ENCODE measurements at regions of chr21 and their contacts with region 1.

Region 1: GRCh38 chr21:45074818-45075595 is 627 bp downstream of the ADARB1 start:
- DNase-seq: peak; percentile 60
- H3K4me3 ChIP-seq: peak overlapping the region; percentile 58 to 96 (median 87)
- H3K27ac ChIP-seq: peak overlapping the region; percentile 30
- H3K4me1 ChIP-seq: peaks cover 39% of the 10 kb centered on the region
- H3K27me3 ChIP-seq: no peaks in the 10 kb centered on the region
- CTCF ChIP-seq: no peak

Region 2: DNA sequence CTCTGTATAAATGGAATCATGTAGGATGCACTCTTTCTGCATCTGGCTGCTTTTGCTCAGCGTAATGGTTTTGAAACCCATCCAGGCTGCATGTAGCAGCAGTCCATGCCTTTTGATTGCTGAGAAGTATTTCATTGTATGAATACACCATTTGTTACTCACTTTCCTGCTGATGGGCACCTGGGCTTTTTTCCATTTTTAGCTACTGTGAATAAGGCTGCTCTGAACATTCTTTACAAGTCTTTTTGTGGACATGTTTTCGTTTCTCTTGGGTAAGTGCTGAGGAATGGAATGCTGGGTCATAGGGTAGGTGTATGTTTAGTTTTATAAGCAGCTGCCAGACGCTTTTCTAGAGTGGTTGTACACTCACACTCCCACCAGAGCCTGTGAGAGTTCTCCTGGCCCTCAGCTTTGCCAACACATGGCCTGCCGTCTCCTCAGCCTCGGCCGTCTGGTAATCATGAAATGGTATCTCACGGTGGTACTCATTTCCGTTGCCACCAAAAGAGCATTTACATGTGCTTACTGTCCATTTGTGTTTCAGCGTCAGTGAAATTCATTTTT is 112.5 kb before region 1 on chr21:
- CTCF ChIA-PET with region 1: no interaction called
- dilution Hi-C with region 1: no loop called
- in situ Hi-C with region 1: no loop called
- intact Hi-C with region 1: loop called (anchors 5 kb)
- DNase-seq: peak; percentile 94
- H3K4me3 ChIP-seq: no peak overlapping the region
- H3K27ac ChIP-seq: peak overlapping the region; percentile 75
- H3K4me1 ChIP-seq: peaks cover 63% of the 10 kb centered on the region
- H3K27me3 ChIP-seq: no peaks in the 10 kb centered on the region
- CTCF ChIP-seq: no peak

Region 3: DNA sequence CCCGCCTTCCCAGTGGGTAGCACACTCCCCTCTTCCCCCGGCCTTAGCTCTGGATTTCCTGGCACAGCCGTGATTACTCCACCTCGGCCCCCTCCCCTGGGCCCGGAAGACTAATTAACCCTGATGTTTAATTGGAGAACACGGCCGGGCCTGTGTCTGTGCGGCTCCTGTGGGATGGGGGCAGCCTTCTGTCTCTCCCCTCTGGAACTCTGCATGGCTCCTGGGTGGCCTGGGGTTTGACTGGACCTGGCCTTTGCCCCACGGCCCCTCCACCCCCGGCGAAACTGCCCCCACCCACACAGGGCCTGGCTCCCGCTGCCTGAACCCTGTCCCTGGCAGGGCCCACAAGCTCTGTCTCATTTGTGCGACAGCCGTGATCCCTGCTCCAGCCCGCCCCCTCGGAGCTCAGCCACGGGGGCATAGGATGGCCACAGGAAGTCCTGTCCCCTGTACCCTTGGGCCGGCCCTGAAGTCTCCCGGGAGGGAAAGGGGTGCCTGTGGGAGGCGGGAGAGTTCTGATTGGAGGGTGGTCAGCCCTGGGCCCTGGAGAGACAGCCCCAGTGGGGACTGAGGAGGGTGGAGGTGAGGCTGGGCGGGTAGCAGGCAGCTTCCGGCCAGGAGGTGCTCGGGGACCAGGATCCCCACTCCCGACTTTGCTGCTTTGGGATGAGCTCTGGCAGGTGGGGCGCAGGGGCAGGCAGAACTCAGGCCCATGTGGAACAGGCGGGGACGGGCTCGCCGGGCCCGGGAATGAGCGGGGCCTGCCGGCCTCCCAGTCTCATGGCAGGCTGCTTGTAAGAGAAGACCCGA is 90.2 kb before region 1 on chr21:
- CTCF ChIA-PET with region 1: no interaction called
- dilution Hi-C with region 1: no loop called
- in situ Hi-C with region 1: no loop called
- intact Hi-C with region 1: no loop called
- DNase-seq: no peak
- H3K4me3 ChIP-seq: no peak overlapping the region
- H3K27ac ChIP-seq: no peak overlapping the region
- H3K4me1 ChIP-seq: peaks cover 20% of the 10 kb centered on the region
- H3K27me3 ChIP-seq: no peaks in the 10 kb centered on the region
- CTCF ChIP-seq: no peak

Region 4: GRCh38 chr21:45011911-45012660 is 62.9 kb before region 1 on chr21:
- CTCF ChIA-PET with region 1: no interaction called
- dilution Hi-C with region 1: loop called (anchors 5 kb)
- in situ Hi-C with region 1: no loop called
- intact Hi-C with region 1: loop called (anchors 5 kb)
- DNase-seq: peak; percentile 92
- H3K4me3 ChIP-seq: no peak overlapping the region
- H3K27ac ChIP-seq: peak overlapping the region; percentile 74
- H3K4me1 ChIP-seq: peaks cover 40% of the 10 kb centered on the region
- H3K27me3 ChIP-seq: no peaks in the 10 kb centered on the region
- CTCF ChIP-seq: no peak

Measured in mammary epithelial cell (primary cell).